HepG2 (cell line): ENCODE measurements at regions of chr2 and their contacts with region 1.

Region 1: GRCh38 chr2:70656421-70657010 is 102.9 kb upstream of the TGFA start:
- DNase-seq: no peak
- ATAC-seq: no peak
- H3K4me3 ChIP-seq: no peak overlapping the region
- H3K27ac ChIP-seq: no peak overlapping the region
- H3K4me1 ChIP-seq: no peaks in the 10 kb centered on the region
- H3K27me3 ChIP-seq: peaks cover 3 to 40% of the 10 kb centered on the region in 2 experiments; a peak in 3 of 5 replicates
- CTCF ChIP-seq: no peak
- EP300 ChIP-seq: no peak
- POLR2A ChIP-seq: no peak
- RAD21 ChIP-seq: no peak

Region 2: GRCh38 chr2:70643715-70644114 is 12.8 kb before region 1 on chr2:
- CTCF ChIA-PET with region 1: no interaction called
- POLR2A ChIA-PET with region 1: no interaction called
- in situ Hi-C with region 1: no loop called
- intact Hi-C with region 1: no loop called
- DNase-seq: peak; percentile 27
- ATAC-seq: no peak
- H3K4me3 ChIP-seq: no peak overlapping the region
- H3K27ac ChIP-seq: no peak overlapping the region
- H3K4me1 ChIP-seq: no peaks in the 10 kb centered on the region
- H3K27me3 ChIP-seq: peaks cover 0 to 29% of the 10 kb centered on the region in 2 experiments; a peak in 3 of 5 replicates
- CTCF ChIP-seq: peak; percentile 59
- EP300 ChIP-seq: no peak
- POLR2A ChIP-seq: no peak
- RAD21 ChIP-seq: peak; percentile 25; the same call in 1 of the 2 replicates

Region 3: DNA sequence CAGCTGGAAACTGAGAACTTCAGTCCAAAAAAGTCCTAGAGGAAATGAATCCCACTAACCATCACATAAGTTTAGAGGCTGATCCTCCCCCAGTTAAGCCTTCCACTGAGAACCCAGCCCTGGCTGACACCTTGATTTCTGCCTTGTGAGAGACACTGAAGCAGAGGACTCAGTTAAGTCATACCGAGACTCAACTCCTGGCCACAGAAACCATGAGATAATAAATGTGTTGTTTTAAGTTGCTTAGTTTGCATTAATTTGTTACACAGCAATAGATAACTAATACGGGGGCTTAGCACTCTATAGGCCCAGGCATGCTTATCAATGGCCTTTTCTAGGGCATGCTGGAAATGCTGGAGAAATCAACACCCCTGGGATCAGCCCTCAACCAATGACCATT is 114.9 kb after region 1 on chr2:
- CTCF ChIA-PET with region 1: no interaction called
- POLR2A ChIA-PET with region 1: no interaction called
- in situ Hi-C with region 1: loop called (anchors 5 kb)
- intact Hi-C with region 1: no loop called
- DNase-seq: no peak
- ATAC-seq: no peak
- H3K4me3 ChIP-seq: no peak overlapping the region
- H3K27ac ChIP-seq: no peak overlapping the region
- H3K4me1 ChIP-seq: no peaks in the 10 kb centered on the region
- H3K27me3 ChIP-seq: peaks cover 2 to 55% of the 10 kb centered on the region in 2 experiments
- CTCF ChIP-seq: no peak
- EP300 ChIP-seq: no peak
- POLR2A ChIP-seq: no peak
- RAD21 ChIP-seq: no peak